HAP-1 (cell line): ENCODE measurements at regions of chr13 and their contacts with region 1.

Region 1: DNA sequence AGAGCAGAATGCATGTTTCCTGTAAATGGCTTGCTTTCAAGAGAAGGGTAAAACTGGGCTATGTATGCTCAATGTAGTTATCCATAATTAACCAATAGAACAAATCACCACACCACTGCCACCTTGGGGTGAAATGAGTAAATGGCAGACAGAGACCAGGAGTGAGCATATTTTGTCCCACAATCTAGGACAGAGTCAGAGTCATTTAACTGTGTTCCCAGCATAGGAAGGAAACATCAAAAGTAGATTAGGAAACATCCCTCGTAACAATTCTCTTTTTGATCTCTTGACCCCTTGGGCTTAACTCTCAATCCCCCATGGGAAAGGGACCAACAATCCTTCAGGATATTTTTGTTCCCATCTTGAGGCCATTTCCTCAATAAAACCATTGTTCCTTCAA is 224.8 kb downstream of the NHLRC3 start:
- DNase-seq: peak; percentile 72 to 75
- H3K4me3 ChIP-seq: no peak overlapping the region
- H3K4me1 ChIP-seq: no peaks in the 10 kb centered on the region; the same call in 1 of the 2 replicates
- H3K27me3 ChIP-seq: no peaks in the 10 kb centered on the region

Region 2: GRCh38 chr13:39062004-39062403 is 201.0 kb before region 1 on chr13:
- in situ Hi-C with region 1: loop called (anchors 10 kb)
- DNase-seq: no peak
- H3K4me3 ChIP-seq: no peak overlapping the region
- H3K4me1 ChIP-seq: no peaks in the 10 kb centered on the region
- H3K27me3 ChIP-seq: no peaks in the 10 kb centered on the region

Region 3: GRCh38 chr13:39144941-39145533 is 118.0 kb before region 1 on chr13:
- in situ Hi-C with region 1: loop called (anchors 5 kb)
- DNase-seq: peak; percentile 76 to 80
- H3K4me3 ChIP-seq: no peak overlapping the region
- H3K4me1 ChIP-seq: 0 out of 2 replicates have a peak, but pooled peaks cover 3% of the 10 kb centered on the region
- H3K27me3 ChIP-seq: no peaks in the 10 kb centered on the region; the same call in 1 of the 2 replicates

Region 4: GRCh38 chr13:39602614-39603366 is 339.8 kb after region 1 on chr13 and contains the start of gene LHFPL6:
- in situ Hi-C with region 1: loop called (anchors 10 kb)
- DNase-seq: peak; percentile 77 to 90
- H3K4me3 ChIP-seq: peak within 1 kb of the TSS; percentile 87
- H3K4me1 ChIP-seq: peaks cover 35% of the 10 kb centered on the region
- H3K27me3 ChIP-seq: no peaks in the 10 kb centered on the region